A673 (cell line): ENCODE measurements at regions of chr21 and their contacts with region 1.

Region 1: GRCh38 chr21:36854391-36854790 is 112.1 kb downstream of the HLCS start:
- DNase-seq: peak; percentile 77
- H3K4me3 ChIP-seq: no peak overlapping the region
- H3K27ac ChIP-seq: no peak overlapping the region
- H3K4me1 ChIP-seq: peaks cover 7% of the 10 kb centered on the region
- H3K27me3 ChIP-seq: no peaks in the 10 kb centered on the region
- CTCF ChIP-seq: peak; percentile 82

Region 2: GRCh38 chr21:36429947-36430546 is 424.3 kb before region 1 on chr21:
- CTCF ChIA-PET with region 1: no interaction called
- POLR2A ChIA-PET with region 1: no interaction called
- intact Hi-C with region 1: loop called (anchors 10 kb)
- DNase-seq: no peak
- H3K4me3 ChIP-seq: no peak overlapping the region
- H3K27ac ChIP-seq: no peak overlapping the region
- H3K4me1 ChIP-seq: no peaks in the 10 kb centered on the region
- H3K27me3 ChIP-seq: no peaks in the 10 kb centered on the region
- CTCF ChIP-seq: no peak

Region 3: DNA sequence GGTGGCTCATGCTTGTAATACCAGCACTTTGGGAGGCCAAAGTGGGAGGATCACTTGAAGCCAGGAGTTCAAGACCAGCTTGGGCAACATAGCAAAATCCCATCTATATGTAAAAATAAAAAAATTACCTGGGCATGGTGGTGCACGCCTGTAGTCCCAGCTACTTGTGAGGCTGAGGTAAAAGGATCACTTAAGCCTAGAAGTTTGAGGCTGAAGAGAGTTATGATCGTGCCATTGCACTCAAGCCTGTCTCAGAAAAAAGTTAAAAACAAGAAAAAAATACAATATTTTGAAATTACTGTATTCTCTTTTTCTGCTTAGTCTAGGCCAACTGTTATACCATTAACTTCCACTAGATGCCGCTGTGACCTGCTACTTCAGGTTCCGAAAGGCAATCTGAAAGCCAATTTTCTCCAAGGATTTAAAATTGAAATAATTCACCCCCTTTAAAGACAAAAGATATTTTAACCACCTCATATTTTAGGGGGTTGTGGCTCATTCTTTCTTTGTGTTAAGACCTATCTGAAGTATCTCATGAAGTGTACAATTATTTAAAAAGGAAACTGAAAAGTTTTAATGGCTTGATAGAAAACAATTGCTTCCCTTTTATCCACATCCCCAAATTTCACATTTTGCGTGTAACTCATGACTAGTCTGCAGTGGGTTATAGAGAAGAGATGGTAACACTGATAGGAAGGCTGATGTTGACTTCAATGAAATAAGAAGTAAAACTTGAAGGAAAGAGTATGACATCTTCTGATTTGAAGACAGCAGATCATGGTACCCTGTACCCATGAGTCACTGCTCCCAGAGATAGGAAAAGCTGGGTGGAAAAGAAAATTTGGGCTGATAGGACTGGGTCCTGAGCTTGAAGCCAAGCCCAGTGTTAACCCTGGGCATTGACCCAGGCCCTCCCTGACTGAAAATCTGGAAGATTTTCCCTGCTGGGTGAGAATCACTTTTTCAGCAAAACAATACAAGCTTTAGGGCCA is 350.0 kb before region 1 on chr21:
- CTCF ChIA-PET with region 1: no interaction called
- POLR2A ChIA-PET with region 1: no interaction called
- intact Hi-C with region 1: loop called (anchors 10 kb)
- DNase-seq: peak; percentile 72
- H3K4me3 ChIP-seq: no peak overlapping the region
- H3K27ac ChIP-seq: peak overlapping the region; percentile 29
- H3K4me1 ChIP-seq: peaks cover 37% of the 10 kb centered on the region
- H3K27me3 ChIP-seq: no peaks in the 10 kb centered on the region
- CTCF ChIP-seq: peak; percentile 86

Region 4: DNA sequence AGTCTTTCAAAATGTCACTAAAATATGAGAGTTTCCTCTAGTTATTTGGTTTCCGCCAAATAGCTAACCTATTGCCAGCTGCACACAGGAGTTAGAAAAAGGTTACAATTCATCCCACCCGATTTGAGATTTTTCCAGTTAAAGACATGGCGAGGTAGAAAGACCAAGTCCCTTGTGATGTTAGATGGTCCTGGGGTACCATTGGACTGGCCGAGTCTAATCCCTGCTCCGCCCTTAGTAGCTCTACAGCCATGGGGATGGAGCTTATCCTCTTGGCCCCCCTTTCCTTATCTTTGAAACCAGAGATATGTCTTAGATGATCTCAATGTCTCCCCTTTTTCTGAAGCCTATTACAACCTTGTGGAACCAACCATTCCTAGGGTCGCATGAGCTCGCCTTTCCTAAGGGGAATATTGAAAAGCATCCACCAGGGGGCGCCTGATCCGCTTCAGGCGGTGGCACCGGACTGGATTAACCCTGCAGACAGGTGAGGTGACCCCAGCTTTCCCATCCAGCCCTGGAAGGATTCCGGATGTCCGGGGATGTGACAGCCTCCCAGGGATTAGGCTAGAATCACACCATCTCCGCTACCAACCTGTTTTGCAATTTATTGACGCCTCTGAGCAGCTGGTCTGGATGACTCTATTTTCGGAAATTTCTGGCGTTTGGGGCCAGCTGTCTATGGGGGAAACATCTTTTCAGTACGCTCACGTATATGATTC is 223.7 kb before region 1 on chr21:
- CTCF ChIA-PET with region 1: interaction called, 15 read pairs
- POLR2A ChIA-PET with region 1: no interaction called
- intact Hi-C with region 1: no loop called
- DNase-seq: peak; percentile 66
- H3K4me3 ChIP-seq: no peak overlapping the region
- H3K27ac ChIP-seq: no peak overlapping the region
- H3K4me1 ChIP-seq: no peaks in the 10 kb centered on the region
- H3K27me3 ChIP-seq: no peaks in the 10 kb centered on the region
- CTCF ChIP-seq: peak; percentile 90

Region 5: GRCh38 chr21:36749935-36750578 is 104.3 kb before region 1 on chr21:
- CTCF ChIA-PET with region 1: no interaction called
- POLR2A ChIA-PET with region 1: no interaction called
- intact Hi-C with region 1: loop called (anchors 5 kb)
- DNase-seq: peak; percentile 46
- H3K4me3 ChIP-seq: no peak overlapping the region
- H3K27ac ChIP-seq: peak overlapping the region; percentile 9
- H3K4me1 ChIP-seq: peaks cover 40% of the 10 kb centered on the region
- H3K27me3 ChIP-seq: no peaks in the 10 kb centered on the region
- CTCF ChIP-seq: no peak

Region 6: DNA sequence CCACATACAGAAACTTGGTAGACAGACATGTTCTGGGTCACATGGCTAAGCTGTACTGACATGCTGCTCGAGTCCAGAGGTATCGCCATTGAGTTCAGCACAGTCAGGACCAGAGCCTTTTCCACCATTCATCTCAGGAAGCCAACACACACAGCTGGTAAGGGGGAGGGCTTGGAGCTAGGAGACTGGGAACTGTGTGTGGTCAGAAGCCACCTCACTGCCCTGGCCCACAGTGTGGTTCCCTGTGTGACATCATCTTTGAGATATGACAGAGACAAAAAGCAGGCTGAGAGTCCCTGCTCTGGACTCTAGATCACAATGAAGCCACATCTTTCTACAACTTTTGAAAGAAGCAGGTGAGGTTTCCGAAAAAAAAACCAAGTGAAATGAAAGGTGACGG is 48.3 kb before region 1 on chr21:
- CTCF ChIA-PET with region 1: no interaction called
- POLR2A ChIA-PET with region 1: no interaction called
- intact Hi-C with region 1: no loop called
- DNase-seq: no peak
- H3K4me3 ChIP-seq: no peak overlapping the region
- H3K27ac ChIP-seq: no peak overlapping the region
- H3K4me1 ChIP-seq: no peaks in the 10 kb centered on the region
- H3K27me3 ChIP-seq: no peaks in the 10 kb centered on the region
- CTCF ChIP-seq: no peak